HAP-1 (cell line): ENCODE measurements at regions of chr18 and their contacts with region 1.

Region 1: GRCh38 chr18:59988098-59988706 is 88.4 kb downstream of the PMAIP1 start:
- DNase-seq: peak; percentile 48 to 50
- H3K4me3 ChIP-seq: no peak overlapping the region
- H3K4me1 ChIP-seq: no peaks in the 10 kb centered on the region
- H3K27me3 ChIP-seq: 0 out of 2 replicates have a peak, but pooled peaks cover 4% of the 10 kb centered on the region

Region 2: GRCh38 chr18:60413944-60414547 is 425.8 kb after region 1 on chr18:
- in situ Hi-C with region 1: loop called (anchors 25 kb)
- DNase-seq: peak; percentile 19 to 37
- H3K4me3 ChIP-seq: no peak overlapping the region
- H3K4me1 ChIP-seq: no peaks in the 10 kb centered on the region
- H3K27me3 ChIP-seq: no peaks in the 10 kb centered on the region